ENCODE measurements at regions of chr12 and their contacts with region 1.

Region 1: DNA sequence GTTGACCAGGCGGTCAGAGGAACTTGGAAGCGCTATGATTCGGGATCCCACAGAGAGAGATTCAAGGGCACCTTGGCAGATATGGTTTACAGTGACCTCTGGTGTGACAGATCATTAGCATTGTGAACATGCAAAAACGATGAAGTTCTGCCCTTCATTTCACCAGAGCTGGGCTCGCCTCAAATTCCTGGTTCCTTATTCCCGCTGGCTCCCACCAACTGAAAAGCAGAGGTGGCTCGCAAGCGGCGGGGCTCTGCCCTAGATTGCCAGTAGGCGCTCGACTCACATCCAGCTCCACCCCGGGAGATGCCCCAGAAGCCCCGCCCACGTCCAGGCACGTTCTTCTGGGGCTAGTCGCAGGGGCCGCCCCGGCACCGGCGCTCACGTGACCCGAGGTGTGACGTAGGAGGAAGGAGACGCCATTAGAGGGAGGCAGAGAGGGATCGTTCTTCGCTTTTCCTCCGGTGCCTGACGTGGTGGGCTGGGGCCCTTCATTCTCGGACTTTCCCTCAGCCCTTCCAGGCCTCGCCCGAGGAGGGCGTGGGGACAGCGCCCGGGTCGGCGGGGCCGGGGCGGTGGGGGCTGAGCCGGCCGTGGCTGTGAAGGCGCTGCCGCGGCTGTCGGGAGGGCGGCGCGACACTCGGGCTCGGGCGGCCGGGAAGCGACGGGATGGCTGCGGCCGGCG is at the start of gene RAB21:
- DNase-seq: peak; percentile 98 to 99
- H3K4me3 ChIP-seq: peak within 1 kb of the TSS; percentile 80 to 99
- H3K27ac ChIP-seq: peak within 1 kb of the TSS; percentile 94 to 99
- H3K4me1 ChIP-seq: peaks cover 0 to 29% (median 20%) of the 10 kb centered on the region in 4 donors
- H3K27me3 ChIP-seq: no peaks in the 10 kb centered on the region
- CTCF ChIP-seq: peak; percentile 50 to 51

Region 2: GRCh38 chr12:71663561-71664294 is 90.9 kb before region 1 on chr12 and contains the start of gene ZFC3H1:
- intact Hi-C with region 1: loop called (anchors 2 kb)
- DNase-seq: peak; percentile 96 to 97
- H3K4me3 ChIP-seq: peak within 1 kb of the TSS; percentile 77 to 81
- H3K27ac ChIP-seq: peak within 1 kb of the TSS; percentile 91 to 97
- H3K4me1 ChIP-seq: peaks cover 0 to 41% (median 13%) of the 10 kb centered on the region in 4 donors
- H3K27me3 ChIP-seq: no peaks in the 10 kb centered on the region
- CTCF ChIP-seq: no peak

Region 3: GRCh38 chr12:71685914-71686665 is 68.5 kb before region 1 on chr12 and contains the start of gene TMEM19:
- intact Hi-C with region 1: loop called (anchors 5 kb)
- DNase-seq: peak; percentile 84 to 95
- H3K4me3 ChIP-seq: peak within 1 kb of the TSS; percentile 73 to 86
- H3K27ac ChIP-seq: peak within 1 kb of the TSS; percentile 74 to 80
- H3K4me1 ChIP-seq: peaks cover 0 to 28% (median 19%) of the 10 kb centered on the region in 4 donors
- H3K27me3 ChIP-seq: no peaks in the 10 kb centered on the region
- CTCF ChIP-seq: peak in 1 of 2 experiments; percentile 15

Region 4: GRCh38 chr12:71838676-71839075 is 84.1 kb after region 1 on chr12:
- intact Hi-C with region 1: loop called (anchors 10 kb)
- DNase-seq: no peak
- H3K4me3 ChIP-seq: peak overlapping the region; percentile 66 to 73
- H3K27ac ChIP-seq: peak overlapping the region; percentile 94 to 96
- H3K4me1 ChIP-seq: peaks cover 0 to 37% (median 13%) of the 10 kb centered on the region in 4 donors
- H3K27me3 ChIP-seq: peaks cover 0 to 3% of the 10 kb centered on the region in 2 donors
- CTCF ChIP-seq: no peak

Measured in tibial artery (tissue), 4 donors.